Adrenal gland (tissue), 19 donors: ENCODE measurements at regions of chr4 and their contacts with region 1.

Region 1: DNA sequence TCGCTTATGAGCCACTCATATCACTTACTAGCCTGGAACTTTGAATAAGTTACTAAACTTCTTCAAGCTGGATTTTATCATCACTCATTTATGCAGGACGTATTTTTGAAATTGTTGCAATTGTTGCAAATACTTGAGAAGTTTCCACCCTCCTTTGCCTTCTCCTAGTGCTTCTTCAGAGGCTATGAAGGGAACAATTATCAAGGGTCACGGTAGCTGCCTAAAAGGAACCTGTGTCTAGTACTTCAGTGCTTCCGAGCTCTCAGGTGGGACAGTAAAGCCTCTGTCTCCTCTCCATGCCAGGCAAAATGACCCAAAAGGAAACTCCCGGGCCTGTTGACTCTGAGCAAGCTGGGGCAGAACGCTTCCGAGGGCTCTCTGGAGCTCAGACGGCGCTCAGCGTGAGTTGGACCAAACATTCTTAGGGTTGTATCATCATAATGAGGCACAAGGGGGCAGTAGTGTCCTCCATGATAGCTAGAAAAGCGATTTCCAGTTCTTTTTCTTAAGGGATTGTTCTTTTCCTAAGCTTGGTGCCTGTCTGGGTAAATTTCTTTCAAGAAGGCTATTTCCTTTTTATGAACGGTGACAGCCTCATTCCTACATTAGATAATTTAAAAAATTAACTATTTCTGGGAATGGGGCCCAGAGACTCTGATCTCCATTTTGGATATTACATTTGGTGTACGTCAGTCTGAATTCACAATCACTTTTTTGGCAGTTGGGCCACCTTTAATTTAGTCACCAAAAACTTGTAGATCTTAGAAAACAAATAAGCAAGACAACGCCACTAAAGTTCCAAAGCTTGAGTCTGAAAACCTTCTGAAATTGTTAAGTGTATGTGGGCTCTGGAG is 73.1 kb downstream of the PACRGL start:
- DNase-seq: peak; percentile 22 to 56 (median 47)
- H3K4me3 ChIP-seq: no peak overlapping the region
- H3K27ac ChIP-seq: no peak overlapping the region
- H3K4me1 ChIP-seq: no peaks in the 10 kb centered on the region
- H3K27me3 ChIP-seq: no peaks in the 10 kb centered on the region
- CTCF ChIP-seq: peak; percentile 48 to 66 (median 58)
- POLR2A ChIP-seq: no peak

Region 2: GRCh38 chr4:21134994-21135393 is 361.6 kb after region 1 on chr4:
- intact Hi-C with region 1: loop called in 1 of 2 experiments (anchors 10 kb)
- DNase-seq: no peak
- H3K4me3 ChIP-seq: no peak overlapping the region
- H3K27ac ChIP-seq: no peak overlapping the region
- H3K4me1 ChIP-seq: no peaks in the 10 kb centered on the region
- H3K27me3 ChIP-seq: no peaks in the 10 kb centered on the region
- CTCF ChIP-seq: peak in 3 of 6 experiments; percentile 13 to 31 (median 25)
- POLR2A ChIP-seq: no peak

Region 3: GRCh38 chr4:21469438-21470300 is 696.3 kb after region 1 on chr4:
- intact Hi-C with region 1: loop called in 1 of 2 experiments (anchors 5 kb)
- DNase-seq: no peak
- H3K4me3 ChIP-seq: no peak overlapping the region
- H3K27ac ChIP-seq: no peak overlapping the region
- H3K4me1 ChIP-seq: no peaks in the 10 kb centered on the region
- H3K27me3 ChIP-seq: peaks cover 3% of the 10 kb centered on the region
- CTCF ChIP-seq: peak; percentile 43 to 66 (median 60)
- POLR2A ChIP-seq: no peak

Region 4: GRCh38 chr4:21535898-21536297 is 762.5 kb after region 1 on chr4:
- intact Hi-C with region 1: no loop called
- DNase-seq: no peak
- H3K4me3 ChIP-seq: no peak overlapping the region
- H3K27ac ChIP-seq: no peak overlapping the region
- H3K4me1 ChIP-seq: no peaks in the 10 kb centered on the region
- H3K27me3 ChIP-seq: no peaks in the 10 kb centered on the region
- CTCF ChIP-seq: no peak
- POLR2A ChIP-seq: no peak